Naive thymus-derived CD4-positive, alpha-beta T cell (primary cell): ENCODE measurements at regions of chr4 and their contacts with region 1.

Region 1: DNA sequence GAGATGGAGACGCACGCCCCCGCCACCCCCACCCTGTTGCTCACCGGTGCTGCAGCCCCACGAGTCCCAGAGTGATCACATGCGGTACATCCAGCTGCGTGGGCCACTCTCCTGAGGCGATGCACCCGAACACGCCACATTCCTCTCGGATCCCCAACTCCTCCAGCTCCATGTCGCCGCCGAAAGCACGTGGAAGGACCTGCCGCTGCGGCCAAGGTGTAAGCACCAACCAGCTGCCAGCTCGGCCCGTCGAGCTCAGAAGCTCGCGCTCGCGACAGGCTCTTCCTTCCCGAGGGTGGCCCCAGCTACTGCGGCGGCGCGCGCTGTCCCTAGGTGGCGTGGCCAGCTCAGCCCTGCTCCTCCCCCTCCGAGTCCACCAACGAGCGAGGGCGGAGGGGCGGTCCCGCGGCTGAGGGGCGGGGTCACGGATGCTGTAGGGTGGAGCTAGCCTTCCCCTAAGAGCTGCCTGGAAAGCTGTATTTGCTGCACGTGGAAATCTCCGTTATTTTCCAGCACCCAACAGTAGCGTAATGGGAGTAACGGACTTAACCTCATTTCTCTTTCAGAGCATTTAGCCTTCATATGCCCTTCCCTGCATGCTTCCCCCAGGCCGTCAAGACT is at the start of gene PPAT:
- DNase-seq: peak; percentile 97 to 100 (median 99)
- ATAC-seq: peak; percentile 91
- H3K4me3 ChIP-seq: peak within 1 kb of the TSS; percentile 93
- H3K4me3 Mint-ChIP-seq: peak within 1 kb of the TSS; percentile 81 to 99 (median 94)
- H3K27ac ChIP-seq: peak within 1 kb of the TSS; percentile 59
- H3K27ac Mint-ChIP-seq: peak within 1 kb of the TSS; percentile 78 to 98 (median 91)
- H3K4me1 ChIP-seq: peaks cover 12 to 15% of the 10 kb centered on the region in 2 donors
- H3K4me1 Mint-ChIP-seq: peaks cover 33 to 63% (median 47%) of the 10 kb centered on the region in 7 donors
- H3K27me3 ChIP-seq: no peaks in the 10 kb centered on the region
- H3K27me3 Mint-ChIP-seq: no peaks in the 10 kb centered on the region
- total RNA-seq, gene PPAT: 7.7 to 30.7 (median 15.3) TPM

Region 2: DNA sequence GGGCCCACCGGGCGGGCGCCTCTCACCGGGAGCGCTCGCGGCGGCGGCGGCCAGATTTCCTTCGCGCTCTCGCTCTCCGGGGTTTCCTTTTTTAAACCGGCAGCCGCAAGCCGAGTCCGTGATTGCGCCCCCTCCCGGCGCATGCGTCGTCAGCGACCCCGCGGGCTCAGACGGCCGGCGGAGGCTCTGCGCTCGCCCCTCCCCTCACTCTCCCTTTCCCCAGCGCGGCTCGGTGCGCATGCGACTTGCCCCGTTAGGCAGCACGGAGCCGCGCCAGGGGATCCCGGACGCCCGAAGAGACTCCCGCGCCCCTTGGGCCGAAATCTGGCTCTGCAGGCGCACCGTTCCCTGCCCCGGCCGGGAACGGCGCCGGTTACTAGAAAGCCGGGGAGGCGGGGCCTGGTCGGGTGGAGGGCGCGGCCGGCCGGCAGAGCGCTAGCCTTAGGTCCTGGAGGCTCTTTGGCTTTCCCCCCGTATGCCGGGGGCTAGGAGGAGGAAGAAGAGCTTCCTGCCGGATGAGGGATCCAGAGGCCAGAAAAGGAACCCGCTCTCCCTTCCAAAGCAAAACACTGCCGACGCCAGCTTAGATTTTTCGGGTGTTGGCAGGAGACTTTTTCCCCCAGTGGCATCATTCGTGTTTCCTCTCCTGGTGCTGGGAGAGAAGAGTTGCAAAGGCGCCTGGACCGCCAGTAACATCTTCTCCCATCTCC is 888.5 kb before region 1 on chr4 and contains the start of gene CLOCK:
- CTCF ChIA-PET with region 1: no interaction called
- POLR2A ChIA-PET with region 1: interaction called, 3 read pairs
- intact Hi-C with region 1: loop called in 1 of 2 experiments (anchors 5 kb)
- DNase-seq: peak; percentile 79 to 87 (median 83)
- ATAC-seq: peak; percentile 82
- H3K4me3 ChIP-seq: peak within 1 kb of the TSS; percentile 82
- H3K4me3 Mint-ChIP-seq: peak within 1 kb of the TSS; percentile 88 to 96 (median 94)
- H3K27ac ChIP-seq: peak within 1 kb of the TSS; percentile 84
- H3K27ac Mint-ChIP-seq: peak within 1 kb of the TSS; percentile 87 to 92 (median 90)
- H3K4me1 ChIP-seq: peaks cover 5 to 8% of the 10 kb centered on the region in 2 donors
- H3K4me1 Mint-ChIP-seq: peaks cover 21 to 57% (median 40%) of the 10 kb centered on the region in 7 donors
- H3K27me3 ChIP-seq: no peaks in the 10 kb centered on the region
- H3K27me3 Mint-ChIP-seq: peaks cover 0 to 29% (median 0%) of the 10 kb centered on the region in 5 donors
- total RNA-seq, gene CLOCK: 7.9 to 12.6 (median 8.9) TPM

Region 3: DNA sequence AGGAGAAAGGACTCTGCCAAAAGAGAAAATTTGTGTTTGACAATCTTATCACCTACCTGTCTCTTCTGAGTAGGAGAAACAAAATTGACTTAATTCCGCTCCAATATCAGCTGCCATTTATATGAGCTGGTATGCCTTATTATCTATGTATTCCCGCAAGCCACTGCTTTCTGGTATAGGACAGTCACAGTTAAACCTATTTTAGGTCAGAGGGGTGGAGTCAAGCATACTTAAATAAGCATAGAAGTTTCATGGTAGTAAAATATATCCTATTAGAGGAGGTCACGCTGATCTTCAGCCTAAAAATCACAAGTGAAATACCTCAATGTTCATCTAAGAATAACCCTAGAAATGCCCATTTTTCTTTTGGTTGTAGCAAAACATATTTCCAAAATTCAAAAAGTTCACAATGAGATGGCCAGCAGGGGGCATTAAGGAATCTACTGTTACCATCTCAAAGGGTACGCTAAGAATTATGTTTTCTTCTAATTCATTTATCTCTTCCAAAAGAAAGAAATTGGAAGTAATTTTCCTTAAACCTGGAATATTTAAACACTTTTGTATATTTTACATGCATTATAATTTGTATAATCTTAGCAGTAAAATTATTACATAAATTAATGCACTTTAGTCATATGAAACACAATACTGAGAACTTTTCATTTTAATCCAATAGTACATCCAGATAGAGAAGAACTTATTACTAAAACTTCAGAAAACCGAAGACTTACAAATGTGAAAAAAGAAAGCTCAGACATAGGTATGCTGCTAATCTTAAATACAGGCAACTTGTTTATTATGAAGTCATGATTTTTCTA is 10.5 kb before region 1 on chr4:
- CTCF ChIA-PET with region 1: interaction called, 15 read pairs
- POLR2A ChIA-PET with region 1: interaction called, 33 read pairs
- intact Hi-C with region 1: loop called (anchors 1 kb)
- DNase-seq: peak in 7 of 9 donors; percentile 22 to 59 (median 48)
- ATAC-seq: peak; percentile 49
- H3K4me3 ChIP-seq: no peak overlapping the region
- H3K4me3 Mint-ChIP-seq: no peak overlapping the region
- H3K27ac ChIP-seq: no peak overlapping the region
- H3K27ac Mint-ChIP-seq: peak overlapping the region in 1 of 9 donors; percentile 1
- H3K4me1 ChIP-seq: no peaks in the 10 kb centered on the region
- H3K4me1 Mint-ChIP-seq: peaks cover 4 to 27% (median 13%) of the 10 kb centered on the region in 7 donors
- H3K27me3 ChIP-seq: no peaks in the 10 kb centered on the region
- H3K27me3 Mint-ChIP-seq: no peaks in the 10 kb centered on the region

Region 4: GRCh38 chr4:56505269-56506130 is 70.1 kb after region 1 on chr4 and contains the start of gene ARL9:
- CTCF ChIA-PET with region 1: no interaction called
- POLR2A ChIA-PET with region 1: interaction called, 3 read pairs
- intact Hi-C with region 1: loop called in 1 of 2 experiments (anchors 1 kb)
- DNase-seq: peak; percentile 49 to 77 (median 68)
- ATAC-seq: peak; percentile 96
- H3K4me3 ChIP-seq: peak within 1 kb of the TSS; percentile 67
- H3K4me3 Mint-ChIP-seq: peak within 1 kb of the TSS; percentile 66 to 96 (median 88)
- H3K27ac ChIP-seq: peak within 1 kb of the TSS; percentile 44
- H3K27ac Mint-ChIP-seq: peak within 1 kb of the TSS in 8 of 9 donors; percentile 49 to 88 (median 72)
- H3K4me1 ChIP-seq: peaks cover 7 to 8% of the 10 kb centered on the region in 2 donors
- H3K4me1 Mint-ChIP-seq: peaks cover 13 to 20% (median 17%) of the 10 kb centered on the region in 7 donors
- H3K27me3 ChIP-seq: no peaks in the 10 kb centered on the region
- H3K27me3 Mint-ChIP-seq: peaks cover 0 to 12% (median 0%) of the 10 kb centered on the region in 5 donors
- total RNA-seq, gene ARL9: 0.19 to 0.43 TPM in 2 of 5 experiments, not detected in the others

Region 5: DNA sequence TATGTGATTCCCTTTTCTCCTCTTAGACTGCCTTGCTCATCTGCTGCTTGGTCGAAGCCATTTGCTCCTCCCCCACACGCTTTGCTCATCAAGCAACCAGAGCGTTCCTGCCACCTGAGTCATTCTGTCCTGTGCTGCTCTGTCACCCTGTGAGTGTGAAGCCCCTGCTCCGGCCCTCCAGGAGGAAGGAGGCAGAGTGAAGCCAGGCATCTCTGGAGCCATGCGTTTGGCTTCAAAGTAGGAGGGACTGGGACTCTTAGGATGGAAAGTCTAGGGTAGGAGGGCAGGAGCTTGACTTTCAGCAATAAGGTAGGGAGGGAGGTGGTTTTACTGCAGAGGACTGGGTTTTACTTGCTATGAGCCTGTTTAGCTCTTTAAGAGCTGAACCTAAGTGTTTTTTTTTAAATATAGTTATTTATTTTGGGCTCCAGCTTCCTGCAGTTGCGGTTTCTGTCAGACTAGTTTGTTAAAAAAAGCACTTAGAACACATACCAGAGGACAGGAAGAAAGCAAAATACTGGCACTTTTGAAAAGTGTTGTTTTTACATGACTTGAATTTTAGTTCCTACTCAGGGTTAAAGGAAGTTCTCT is 322.5 kb after region 1 on chr4:
- CTCF ChIA-PET with region 1: no interaction called
- POLR2A ChIA-PET with region 1: no interaction called
- intact Hi-C with region 1: loop called (anchors 2 to 5 kb)
- DNase-seq: peak; percentile 12 to 85 (median 68)
- ATAC-seq: peak; percentile 88
- H3K4me3 ChIP-seq: peak overlapping the region; percentile 46
- H3K4me3 Mint-ChIP-seq: peak overlapping the region; percentile 71 to 91 (median 85)
- H3K27ac ChIP-seq: peak overlapping the region; percentile 65
- H3K27ac Mint-ChIP-seq: peak overlapping the region; percentile 76 to 99 (median 92)
- H3K4me1 ChIP-seq: peaks cover 28 to 29% of the 10 kb centered on the region in 2 donors
- H3K4me1 Mint-ChIP-seq: peaks cover 39 to 76% (median 57%) of the 10 kb centered on the region in 7 donors
- H3K27me3 ChIP-seq: no peaks in the 10 kb centered on the region
- H3K27me3 Mint-ChIP-seq: peaks cover 0 to 14% (median 0%) of the 10 kb centered on the region in 5 donors

Region 6: DNA sequence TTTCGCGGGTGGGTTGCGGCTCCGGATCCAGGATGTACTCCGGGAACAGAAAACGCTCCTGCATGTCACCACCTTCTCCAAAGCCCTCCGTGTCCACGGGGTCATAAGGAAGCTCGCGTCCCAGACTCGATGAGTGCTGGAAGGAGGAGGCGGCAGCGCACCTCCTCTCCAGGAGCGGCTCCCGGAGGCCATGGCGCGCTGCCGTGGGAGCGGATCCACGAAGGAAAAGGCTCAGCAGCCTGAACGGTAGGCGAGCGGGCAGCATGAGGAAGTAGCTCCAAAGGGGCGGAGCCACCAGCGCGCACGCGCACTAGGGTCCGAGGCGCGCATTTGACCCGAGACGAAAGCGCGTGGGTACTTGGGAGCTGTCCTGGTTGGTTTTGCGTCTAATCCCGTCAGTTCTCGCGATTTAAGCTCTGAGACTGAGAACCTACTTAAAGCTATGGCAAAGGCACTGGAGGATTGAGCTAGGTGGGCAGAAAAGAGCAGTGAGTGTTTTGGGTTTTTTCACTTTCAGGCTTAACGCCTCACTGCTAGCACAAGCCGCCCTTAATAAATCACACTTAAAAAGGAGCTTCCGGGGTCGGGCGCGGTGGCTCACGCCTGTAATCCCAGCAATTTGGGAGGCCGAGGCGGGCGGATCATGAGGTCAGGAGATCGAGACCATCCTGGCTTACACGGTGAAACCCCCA is 542.1 kb after region 1 on chr4 and contains the start of gene NOA1:
- CTCF ChIA-PET with region 1: interaction called, 3 read pairs
- POLR2A ChIA-PET with region 1: interaction called, 50 read pairs
- intact Hi-C with region 1: loop called (anchors 1 kb)
- DNase-seq: peak; percentile 98 to 99 (median 99)
- ATAC-seq: peak; percentile 86
- H3K4me3 ChIP-seq: peak within 1 kb of the TSS; percentile 80
- H3K4me3 Mint-ChIP-seq: peak within 1 kb of the TSS; percentile 92 to 100 (median 98)
- H3K27ac ChIP-seq: peak within 1 kb of the TSS; percentile 82
- H3K27ac Mint-ChIP-seq: peak within 1 kb of the TSS; percentile 94 to 100 (median 98)
- H3K4me1 ChIP-seq: peaks cover 36 to 38% of the 10 kb centered on the region in 2 donors
- H3K4me1 Mint-ChIP-seq: peaks cover 41 to 70% (median 52%) of the 10 kb centered on the region in 7 donors
- H3K27me3 ChIP-seq: no peaks in the 10 kb centered on the region
- H3K27me3 Mint-ChIP-seq: peaks cover 0 to 2% (median 0%) of the 10 kb centered on the region in 5 donors
- total RNA-seq, gene NOA1: 13.6 to 23.0 (median 20.9) TPM